ENCODE measurements at regions of chr1 and their contacts with region 1.

Region 1: GRCh38 chr1:228515200-228515834 is 28.1 kb downstream of the RNF187 start:
- DNase-seq: peak; percentile 75 to 79 (median 77)
- ATAC-seq: peak; percentile 55
- H3K4me3 ChIP-seq: no peak overlapping the region
- H3K27ac ChIP-seq: no peak overlapping the region
- H3K4me1 ChIP-seq: peaks cover 42 to 46% of the 10 kb centered on the region in 2 experiments
- H3K27me3 ChIP-seq: peaks cover 0 to 2% of the 10 kb centered on the region in 2 experiments; a peak in 1 of 5 replicates
- CTCF ChIP-seq: peak; percentile 89 to 98 (median 95)
- EP300 ChIP-seq: no peak
- POLR2A ChIP-seq: no peak
- RAD21 ChIP-seq: peak; percentile 98 to 99

Region 2: DNA sequence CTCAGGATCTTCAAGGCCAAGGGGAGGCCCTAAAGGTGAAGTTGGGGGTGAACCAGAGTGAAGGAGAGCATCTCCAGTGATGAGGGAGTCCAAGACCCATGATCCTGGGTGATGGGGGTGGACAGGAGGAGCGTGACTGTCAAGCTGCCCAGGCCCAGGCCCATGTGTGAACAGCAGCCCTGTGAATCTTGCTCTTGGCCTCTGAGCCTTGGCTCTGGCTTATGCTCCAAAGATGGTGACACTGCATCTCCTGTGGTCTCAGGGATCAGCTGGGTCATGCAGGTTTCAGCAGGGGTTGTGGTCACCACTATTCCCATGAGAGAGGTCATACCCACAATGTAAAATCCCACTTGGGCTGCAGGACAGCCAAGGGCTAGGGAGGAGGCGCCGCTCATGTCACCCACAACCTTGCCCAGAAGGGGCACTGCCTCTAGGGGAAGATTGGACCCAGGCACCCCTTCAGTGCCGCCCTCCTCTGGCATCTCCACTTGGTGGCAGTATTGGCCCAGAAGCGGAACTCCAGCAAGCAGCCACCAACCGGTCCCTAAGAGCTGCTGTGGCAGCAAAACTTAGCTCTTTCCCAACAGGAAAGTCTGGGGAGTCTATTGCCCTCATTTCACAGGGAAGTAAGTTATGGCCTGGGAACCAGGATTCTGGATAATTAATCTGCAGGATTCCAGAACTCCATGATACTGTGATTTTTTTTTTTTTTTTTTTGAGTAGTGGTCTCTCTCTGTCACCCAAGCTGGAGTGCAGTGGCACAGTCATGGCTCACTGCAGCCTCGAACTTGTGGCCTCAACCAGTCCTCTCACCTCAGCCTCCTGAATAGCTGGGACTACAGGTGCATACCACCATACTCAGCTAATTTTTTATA is 516.0 kb before region 1 on chr1:
- CTCF ChIA-PET with region 1: interaction called, 7 read pairs
- POLR2A ChIA-PET with region 1: no interaction called
- in situ Hi-C with region 1: loop called (anchors 5 kb)
- intact Hi-C with region 1: loop called (anchors 5 kb)
- DNase-seq: peak; percentile 27 to 72 (median 46)
- ATAC-seq: peak; percentile 80
- H3K4me3 ChIP-seq: no peak overlapping the region
- H3K27ac ChIP-seq: no peak overlapping the region
- H3K4me1 ChIP-seq: peaks cover 0 to 4% of the 10 kb centered on the region in 2 experiments; a peak in 2 of 5 replicates
- H3K27me3 ChIP-seq: peaks cover 6 to 38% of the 10 kb centered on the region in 2 experiments; a peak in 3 of 5 replicates
- CTCF ChIP-seq: peak; percentile 78 to 95 (median 90)
- EP300 ChIP-seq: no peak
- POLR2A ChIP-seq: no peak
- RAD21 ChIP-seq: peak; percentile 58 to 76

Region 3: GRCh38 chr1:228131766-228132165 is 383.6 kb before region 1 on chr1:
- CTCF ChIA-PET with region 1: interaction called, 5 read pairs
- POLR2A ChIA-PET with region 1: no interaction called
- in situ Hi-C with region 1: no loop called
- intact Hi-C with region 1: loop called (anchors 1 kb)
- DNase-seq: no peak
- ATAC-seq: no peak
- H3K4me3 ChIP-seq: no peak overlapping the region
- H3K27ac ChIP-seq: no peak overlapping the region
- H3K4me1 ChIP-seq: peaks cover 3 to 6% of the 10 kb centered on the region in 2 experiments; a peak in 3 of 5 replicates
- H3K27me3 ChIP-seq: no peaks in the 10 kb centered on the region
- CTCF ChIP-seq: no peak
- EP300 ChIP-seq: no peak
- POLR2A ChIP-seq: no peak
- RAD21 ChIP-seq: no peak

Region 4: DNA sequence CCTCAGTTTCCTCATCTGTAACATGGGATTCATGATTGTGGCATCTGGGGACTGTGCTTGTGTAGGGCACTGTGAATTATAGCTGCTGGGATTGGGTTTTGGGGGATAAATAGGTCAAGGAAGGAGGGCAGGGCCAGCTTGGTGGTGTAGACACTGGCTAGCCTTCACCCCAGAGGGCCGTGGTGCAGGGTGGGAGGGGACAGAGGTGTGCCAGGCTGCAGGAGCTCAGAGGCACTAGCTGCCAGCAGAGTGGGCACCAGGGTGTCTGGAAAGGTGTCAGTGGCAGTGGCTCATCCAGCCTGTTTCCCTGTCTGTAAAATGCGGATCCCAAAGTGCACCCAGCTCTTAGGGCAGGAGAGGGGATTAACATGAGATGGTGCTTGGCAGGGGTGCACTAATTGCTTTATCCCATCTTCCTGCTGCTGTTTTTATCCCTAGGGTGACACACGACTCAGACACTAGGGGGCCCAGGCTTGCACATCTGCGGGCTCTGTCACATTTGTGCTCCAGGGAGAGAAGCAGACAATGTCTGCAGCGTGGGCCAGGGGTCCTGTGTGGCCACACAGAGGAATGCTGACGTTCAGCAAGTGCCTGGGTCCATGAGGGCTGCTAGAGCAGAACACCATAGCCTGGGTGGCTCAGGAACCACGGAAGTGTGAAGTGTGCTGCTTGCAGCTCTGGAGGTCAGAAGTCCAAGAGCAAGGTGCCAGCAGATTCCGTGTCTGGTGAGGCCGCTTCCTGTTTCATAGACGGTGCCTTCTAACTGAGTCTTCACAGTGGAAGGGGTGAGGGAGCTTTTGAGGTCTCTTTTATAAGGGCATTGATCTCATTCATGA is 288.1 kb before region 1 on chr1:
- CTCF ChIA-PET with region 1: no interaction called
- POLR2A ChIA-PET with region 1: no interaction called
- in situ Hi-C with region 1: loop called (anchors 10 kb)
- intact Hi-C with region 1: no loop called
- DNase-seq: peak in 2 of 4 experiments; percentile 56 to 58
- ATAC-seq: peak; percentile 84
- H3K4me3 ChIP-seq: no peak overlapping the region
- H3K27ac ChIP-seq: no peak overlapping the region
- H3K4me1 ChIP-seq: peaks cover 4 to 5% of the 10 kb centered on the region in 2 experiments; a peak in 3 of 5 replicates
- H3K27me3 ChIP-seq: no peaks in the 10 kb centered on the region; a peak in 1 of 5 replicates
- CTCF ChIP-seq: peak; percentile 56 to 62 (median 58); a peak in 5 of 6 replicates
- EP300 ChIP-seq: no peak
- POLR2A ChIP-seq: no peak
- RAD21 ChIP-seq: peak in 1 of 2 experiments; percentile 36; a peak in 1 of 4 replicates

Region 5: GRCh38 chr1:228340686-228341449 is 174.4 kb before region 1 on chr1:
- CTCF ChIA-PET with region 1: interaction called, 21 read pairs
- POLR2A ChIA-PET with region 1: no interaction called
- in situ Hi-C with region 1: loop called (anchors 10 kb)
- intact Hi-C with region 1: loop called (anchors 2 kb)
- DNase-seq: peak; percentile 82 to 88 (median 86)
- ATAC-seq: peak; percentile 88
- H3K4me3 ChIP-seq: peak overlapping the region; percentile 10; the same call in 1 of the 2 replicates
- H3K27ac ChIP-seq: no peak overlapping the region
- H3K4me1 ChIP-seq: peaks cover 5 to 59% of the 10 kb centered on the region in 2 experiments; a peak in 3 of 5 replicates
- H3K27me3 ChIP-seq: peaks cover 0 to 29% of the 10 kb centered on the region in 2 experiments; a peak in 3 of 5 replicates
- CTCF ChIP-seq: peak; percentile 79 to 88 (median 80)
- EP300 ChIP-seq: peak; percentile 77
- POLR2A ChIP-seq: no peak
- RAD21 ChIP-seq: peak; percentile 79 to 88

Region 6: DNA sequence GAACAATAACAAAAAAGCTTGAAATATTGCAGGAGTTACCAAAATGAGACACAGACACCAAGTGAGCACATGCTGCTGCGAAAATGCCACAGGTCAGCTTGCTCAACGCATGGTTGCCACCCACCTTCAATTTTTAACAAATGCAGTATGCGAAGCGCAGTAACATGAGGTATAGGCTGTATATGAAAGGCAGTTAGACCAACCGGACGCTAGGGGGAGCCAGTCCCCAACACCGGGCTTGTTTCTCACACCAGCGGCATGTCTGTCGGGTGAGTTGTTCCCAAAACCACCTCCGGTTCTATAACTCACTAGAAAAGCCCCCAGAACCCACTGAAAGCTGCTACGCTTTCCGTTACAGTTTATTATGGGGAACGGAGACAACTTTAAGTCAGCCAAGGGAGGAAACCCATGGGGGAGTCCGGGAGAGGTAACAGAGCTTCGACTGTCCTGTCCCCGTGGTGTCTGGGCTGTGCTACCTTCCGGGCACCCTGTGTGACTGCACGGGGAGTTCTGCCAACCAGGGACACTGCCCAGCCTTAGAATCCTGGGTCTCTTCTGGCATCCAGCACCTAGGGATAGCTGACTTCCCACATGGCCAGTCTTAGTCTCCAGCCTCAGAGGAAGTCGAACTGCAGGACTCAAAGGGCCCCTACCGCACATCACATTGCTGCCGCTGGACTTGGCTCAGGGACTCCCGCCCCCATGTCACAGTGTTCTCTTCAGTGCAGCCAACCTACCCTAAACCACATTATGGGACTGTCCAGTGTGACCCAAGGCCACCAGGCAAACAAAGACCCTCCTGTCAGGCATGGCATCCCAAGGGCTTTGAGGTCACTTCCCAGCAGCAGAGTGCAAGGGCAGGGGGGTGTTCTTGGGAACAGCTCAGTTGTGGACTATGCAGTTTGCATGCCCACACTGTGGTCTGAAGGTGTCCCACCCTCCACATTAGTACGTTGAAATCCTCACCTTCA is 14.1 kb before region 1 on chr1:
- CTCF ChIA-PET with region 1: interaction called, 11 read pairs
- POLR2A ChIA-PET with region 1: interaction called, 30 read pairs
- in situ Hi-C with region 1: no loop called
- intact Hi-C with region 1: loop called (anchors 1 kb)
- DNase-seq: peak; percentile 87 to 95 (median 88)
- ATAC-seq: peak; percentile 93
- H3K4me3 ChIP-seq: no peak overlapping the region
- H3K27ac ChIP-seq: no peak overlapping the region
- H3K4me1 ChIP-seq: peaks cover 21 to 36% of the 10 kb centered on the region in 2 experiments; a peak in 4 of 5 replicates
- H3K27me3 ChIP-seq: no peaks in the 10 kb centered on the region
- CTCF ChIP-seq: peak; percentile 95 to 99 (median 98)
- EP300 ChIP-seq: no peak
- POLR2A ChIP-seq: no peak
- RAD21 ChIP-seq: peak; percentile 88 to 93